ENCODE measurements at regions of chr1 and their contacts with region 1.

Region 1: DNA sequence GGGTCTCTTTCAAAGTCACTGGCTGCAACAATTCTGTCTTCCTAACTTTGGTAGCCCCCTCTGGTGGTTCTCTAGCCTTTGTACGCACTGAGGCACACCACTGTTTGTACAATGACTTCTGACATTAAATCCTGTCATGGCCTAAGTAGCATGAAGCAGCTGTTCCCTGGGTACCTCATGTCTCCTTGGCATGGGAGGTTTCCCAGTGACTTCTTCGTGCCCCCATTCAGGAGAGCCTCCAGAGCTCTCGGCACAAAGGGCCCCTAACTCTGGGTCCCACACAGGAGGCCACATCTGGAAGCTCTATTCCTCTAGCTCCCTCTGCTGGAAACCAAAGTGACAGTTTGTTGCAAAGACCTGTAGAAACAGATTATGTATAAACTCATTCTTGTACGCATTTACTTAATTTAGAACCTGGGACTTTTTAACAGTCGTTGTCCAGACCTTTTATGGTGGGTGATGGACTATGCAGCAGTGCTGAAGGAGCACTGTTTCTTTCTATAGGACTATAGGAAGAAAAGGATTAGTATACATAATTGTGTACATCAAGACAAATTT is 13.4 kb downstream of the SWT1 start:
- DNase-seq: peak; percentile 56
- ATAC-seq: peak; percentile 96
- H3K4me3 ChIP-seq: no peak overlapping the region
- H3K27ac ChIP-seq: no peak overlapping the region
- H3K4me1 ChIP-seq: 0 out of 4 replicates have a peak, but pooled peaks cover 0 to 3% of the 10 kb centered on the region in 2 experiments
- H3K27me3 ChIP-seq: no peaks in the 10 kb centered on the region
- CTCF ChIP-seq: peak; percentile 68 to 98 (median 91)
- POLR2A ChIP-seq: no peak
- RAD21 ChIP-seq: peak; percentile 82

Region 2: GRCh38 chr1:184805667-184806295 is 364.6 kb before region 1 on chr1:
- CTCF ChIA-PET with region 1: interaction called, 51 read pairs
- POLR2A ChIA-PET with region 1: no interaction called
- RAD21 ChIA-PET with region 1: interaction called, 6 to 9 read pairs
- intact Hi-C with region 1: loop called (anchors 1 kb)
- DNase-seq: peak; percentile 72
- ATAC-seq: peak; percentile 100
- H3K4me3 ChIP-seq: no peak overlapping the region
- H3K27ac ChIP-seq: no peak overlapping the region
- H3K4me1 ChIP-seq: 0 out of 4 replicates have a peak, but pooled peaks cover 0 to 3% of the 10 kb centered on the region in 2 experiments
- H3K27me3 ChIP-seq: no peaks in the 10 kb centered on the region
- CTCF ChIP-seq: peak; percentile 76 to 93 (median 92)
- POLR2A ChIP-seq: no peak
- RAD21 ChIP-seq: peak; percentile 97

Region 3: GRCh38 chr1:184982002-184982954 is 188.1 kb before region 1 on chr1:
- CTCF ChIA-PET with region 1: interaction called, 11 read pairs
- POLR2A ChIA-PET with region 1: no interaction called
- RAD21 ChIA-PET with region 1: no interaction called
- intact Hi-C with region 1: loop called (anchors 1 kb)
- DNase-seq: peak; percentile 37
- ATAC-seq: peak; percentile 99
- H3K4me3 ChIP-seq: no peak overlapping the region
- H3K27ac ChIP-seq: no peak overlapping the region
- H3K4me1 ChIP-seq: no peaks in the 10 kb centered on the region
- H3K27me3 ChIP-seq: no peaks in the 10 kb centered on the region
- CTCF ChIP-seq: peak; percentile 67 to 86 (median 85)
- POLR2A ChIP-seq: no peak
- RAD21 ChIP-seq: peak; percentile 87

Region 4: GRCh38 chr1:185156854-185157598 is 13.3 kb before region 1 on chr1 and contains the starts of genes SWT1 and TRMT1L:
- CTCF ChIA-PET with region 1: interaction called, 25 read pairs
- POLR2A ChIA-PET with region 1: no interaction called
- RAD21 ChIA-PET with region 1: no interaction called
- intact Hi-C with region 1: no loop called
- DNase-seq: peak; percentile 96
- ATAC-seq: peak; percentile 94
- H3K4me3 ChIP-seq: peak within 1 kb of the TSS; percentile 76 to 88
- H3K27ac ChIP-seq: peak within 1 kb of the TSS; percentile 76
- H3K4me1 ChIP-seq: peaks cover 0 to 19% of the 10 kb centered on the region in 2 experiments; a peak in 2 of 4 replicates
- H3K27me3 ChIP-seq: no peaks in the 10 kb centered on the region
- CTCF ChIP-seq: no peak
- POLR2A ChIP-seq: peak; percentile 90
- RAD21 ChIP-seq: no peak
- total RNA-seq, gene SWT1: 3.3 TPM
- total RNA-seq, gene TRMT1L: 28.3 TPM

Region 5: GRCh38 chr1:185317034-185317885 is 146.9 kb after region 1 on chr1 and contains the start of gene IVNS1ABP:
- CTCF ChIA-PET with region 1: no interaction called
- POLR2A ChIA-PET with region 1: no interaction called
- RAD21 ChIA-PET with region 1: no interaction called
- intact Hi-C with region 1: no loop called
- DNase-seq: peak; percentile 85
- ATAC-seq: peak; percentile 82
- H3K4me3 ChIP-seq: peak within 1 kb of the TSS; percentile 81 to 88
- H3K27ac ChIP-seq: peak within 1 kb of the TSS; percentile 92
- H3K4me1 ChIP-seq: peaks cover 8 to 27% of the 10 kb centered on the region in 2 experiments; a peak in 3 of 4 replicates
- H3K27me3 ChIP-seq: no peaks in the 10 kb centered on the region
- CTCF ChIP-seq: peak; percentile 13 to 24 (median 20); a peak in 2 of 6 replicates
- POLR2A ChIP-seq: peak; percentile 64
- RAD21 ChIP-seq: peak; percentile 67
- total RNA-seq, gene IVNS1ABP: 57.9 TPM

Region 6: GRCh38 chr1:185681034-185681633 is 510.8 kb after region 1 on chr1:
- CTCF ChIA-PET with region 1: interaction called, 13 read pairs
- POLR2A ChIA-PET with region 1: no interaction called
- RAD21 ChIA-PET with region 1: no interaction called
- intact Hi-C with region 1: no loop called
- DNase-seq: peak; percentile 45
- ATAC-seq: peak; percentile 85
- H3K4me3 ChIP-seq: no peak overlapping the region
- H3K27ac ChIP-seq: no peak overlapping the region
- H3K4me1 ChIP-seq: no peaks in the 10 kb centered on the region
- H3K27me3 ChIP-seq: no peaks in the 10 kb centered on the region
- CTCF ChIP-seq: peak; percentile 52 to 54 (median 53); a peak in 5 of 6 replicates
- POLR2A ChIP-seq: no peak
- RAD21 ChIP-seq: peak; percentile 79

Measured in HCT116 (cell line).